ENCODE measurements at regions of chr9 and their contacts with region 1.

Region 1: DNA sequence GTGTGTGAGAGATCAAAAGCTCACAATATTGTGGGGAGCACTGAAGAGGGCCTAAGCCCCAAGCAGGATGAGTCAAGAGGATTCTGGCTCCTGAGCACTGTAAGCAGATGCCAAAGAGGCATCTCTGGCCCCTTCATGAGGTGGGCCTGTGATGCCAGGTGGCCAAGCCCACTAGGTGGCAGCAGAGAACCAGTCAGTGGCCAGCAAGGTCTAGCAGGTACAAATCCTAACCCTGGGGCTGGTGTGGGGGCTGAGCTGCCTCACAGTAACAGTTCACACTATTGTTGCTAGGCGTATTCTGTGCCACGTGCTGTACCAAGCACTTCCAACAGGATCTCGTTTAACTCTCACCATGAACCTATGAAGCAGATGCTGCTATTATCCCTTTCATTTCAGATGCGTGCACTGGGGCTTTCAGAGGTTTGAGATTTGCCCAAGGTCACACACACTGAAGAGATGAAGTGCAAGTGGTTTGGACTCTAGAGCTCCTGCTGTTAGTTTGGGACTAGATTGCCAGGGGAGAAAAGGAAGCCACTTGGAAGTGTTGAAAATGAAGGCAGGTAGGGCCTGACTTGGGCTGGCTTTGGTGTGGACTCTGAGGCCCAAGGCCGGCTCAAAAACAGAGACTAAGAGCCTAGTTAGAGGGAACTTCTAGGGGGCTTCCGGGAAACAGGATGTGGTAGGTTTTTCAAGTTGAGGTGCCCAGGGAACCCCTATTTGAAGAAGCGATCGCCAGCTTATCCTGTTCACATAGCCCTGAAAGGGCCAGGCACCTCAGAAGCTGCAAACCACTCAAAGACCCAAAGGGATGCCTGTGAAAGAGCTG is 4.4 kb upstream of the MLANA start:
- DNase-seq: peak; percentile 88
- CTCF ChIP-seq: peak; percentile 96

Region 2: DNA sequence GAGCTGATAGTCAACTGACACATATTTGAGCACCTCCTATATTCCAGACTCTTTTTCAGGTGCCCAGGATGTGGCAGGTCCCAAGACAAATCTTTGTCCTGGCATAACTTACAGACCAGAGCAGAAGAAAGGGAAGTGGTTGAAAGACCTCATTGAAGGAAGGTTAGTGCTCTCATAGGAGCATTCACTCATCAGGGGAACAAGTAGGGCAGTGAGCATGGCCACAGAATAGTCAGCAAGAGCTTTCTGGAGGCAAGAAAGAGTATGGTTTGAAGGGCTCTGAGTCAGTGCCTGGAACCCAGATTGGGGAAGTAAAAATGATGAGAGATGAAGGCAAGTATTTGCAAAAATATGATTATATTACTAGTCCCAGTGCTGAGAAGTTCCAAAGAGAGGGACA is 28.4 kb before region 1 on chr9:
- CTCF ChIA-PET with region 1: interaction called, 27 read pairs
- POLR2A ChIA-PET with region 1: no interaction called
- DNase-seq: no peak
- CTCF ChIP-seq: no peak

Region 3: DNA sequence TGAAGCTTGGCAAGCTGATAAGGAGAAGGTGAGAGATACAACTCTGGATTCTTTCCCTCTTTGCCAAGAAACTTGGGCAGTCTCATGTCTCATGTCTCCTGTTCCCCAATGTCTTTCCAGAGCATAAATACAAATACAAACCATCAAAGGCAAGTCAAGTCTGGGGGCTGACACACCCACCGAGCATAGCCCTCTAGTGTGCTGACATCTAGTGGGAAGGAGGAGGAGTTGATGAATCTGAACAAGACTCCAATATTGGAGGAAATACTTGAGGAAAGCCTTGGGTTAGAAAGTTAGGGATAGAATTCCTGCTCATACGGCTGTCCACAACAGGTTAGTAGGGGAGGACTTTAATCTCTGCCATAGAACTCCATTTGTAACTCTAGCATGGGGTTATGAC is 13.0 kb after region 1 on chr9:
- CTCF ChIA-PET with region 1: interaction called, 104 read pairs
- POLR2A ChIA-PET with region 1: no interaction called
- DNase-seq: no peak
- CTCF ChIP-seq: peak; percentile 15

Region 4: GRCh38 chr9:6029604-6030274 is 143.4 kb after region 1 on chr9:
- CTCF ChIA-PET with region 1: interaction called, 20 read pairs
- POLR2A ChIA-PET with region 1: no interaction called
- DNase-seq: no peak
- CTCF ChIP-seq: no peak

Region 5: DNA sequence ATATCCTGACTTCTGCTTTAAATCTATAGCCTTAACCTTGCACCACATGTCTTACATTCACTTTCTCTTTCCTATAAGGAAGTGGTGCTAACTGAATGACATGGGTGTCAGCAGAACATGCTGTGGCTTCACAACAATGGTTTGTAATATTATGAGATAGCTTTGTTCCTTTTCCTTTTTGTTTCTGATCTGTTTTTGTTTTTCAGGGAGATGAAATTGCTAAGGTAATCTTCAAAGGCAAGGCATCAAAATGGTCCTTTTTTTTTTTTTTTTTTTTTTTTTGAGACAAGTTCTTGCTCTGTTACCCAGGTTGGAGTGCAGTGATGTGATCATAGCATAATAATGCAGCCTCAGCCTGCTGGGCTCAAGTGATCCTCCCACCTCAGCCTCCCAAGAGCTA is 182.7 kb after region 1 on chr9:
- CTCF ChIA-PET with region 1: interaction called, 11 read pairs
- POLR2A ChIA-PET with region 1: no interaction called
- DNase-seq: peak; percentile 74
- CTCF ChIP-seq: no peak

Measured in GM10248 (cell line).